ENCODE measurements at regions of chr15 and their contacts with region 1.

Region 1: DNA sequence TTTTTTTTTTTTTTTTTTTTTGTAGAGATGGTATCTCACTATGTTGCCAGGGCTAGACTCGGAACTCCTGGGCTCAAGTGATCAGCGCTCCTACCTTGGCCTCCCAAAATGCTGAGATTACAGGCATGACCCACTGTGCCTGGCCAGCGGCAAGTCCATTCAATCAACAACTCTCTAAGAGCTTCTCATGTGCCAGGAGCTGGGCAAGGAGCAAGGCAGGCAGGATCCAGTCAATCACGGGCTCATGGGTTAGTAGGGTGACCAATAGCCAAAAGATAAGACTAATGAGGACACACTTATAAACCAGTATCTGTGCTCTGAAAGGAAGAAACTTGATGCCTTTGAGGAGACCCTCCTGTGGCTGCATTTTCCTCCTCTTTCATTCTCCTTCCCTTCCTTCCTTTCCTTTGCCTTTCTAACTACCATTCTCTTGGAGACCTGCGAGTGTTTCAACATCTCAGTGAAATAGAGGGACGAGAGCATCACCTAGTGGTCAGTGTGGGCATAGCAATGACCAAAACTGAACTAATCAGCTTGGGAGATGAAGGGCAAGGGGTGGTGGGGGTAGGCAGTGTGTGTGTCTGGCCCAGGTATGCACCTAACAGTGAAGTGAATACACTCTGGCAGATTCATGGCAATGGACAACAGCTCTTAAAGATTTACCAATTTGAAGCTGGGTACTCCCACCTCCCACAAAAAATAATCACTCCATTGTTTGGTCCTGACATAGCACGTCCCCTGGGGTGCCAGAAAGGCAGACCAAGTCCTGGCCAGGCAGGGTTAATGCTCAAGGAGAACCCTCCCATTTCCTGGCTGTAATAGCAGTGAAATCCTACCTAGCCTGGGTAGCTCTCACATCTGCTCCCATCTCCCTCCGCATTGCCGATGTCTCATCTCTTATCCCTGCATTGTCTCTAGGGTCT is 6.2 kb downstream of the RPP25 start:
- DNase-seq: peak; percentile 54 to 82 (median 75)
- ATAC-seq: peak; percentile 97
- H3K4me3 ChIP-seq: no peak overlapping the region
- H3K4me3 Mint-ChIP-seq: no peak overlapping the region
- H3K27ac ChIP-seq: no peak overlapping the region
- H3K27ac Mint-ChIP-seq: peak overlapping the region in 2 of 9 donors; percentile 28 to 54
- H3K4me1 ChIP-seq: no peaks in the 10 kb centered on the region
- H3K4me1 Mint-ChIP-seq: peaks cover 4 to 17% (median 10%) of the 10 kb centered on the region in 7 donors
- H3K27me3 ChIP-seq: no peaks in the 10 kb centered on the region
- H3K27me3 Mint-ChIP-seq: peaks cover 0 to 3% (median 0%) of the 10 kb centered on the region in 5 donors

Region 2: GRCh38 chr15:74799856-74800547 is 150.3 kb before region 1 on chr15:
- CTCF ChIA-PET with region 1: interaction called, 6 read pairs
- POLR2A ChIA-PET with region 1: interaction called, 3 read pairs
- intact Hi-C with region 1: loop called in 1 of 2 experiments (anchors 1 kb)
- DNase-seq: peak; percentile 76 to 92 (median 85)
- ATAC-seq: peak; percentile 98
- H3K4me3 ChIP-seq: no peak overlapping the region
- H3K4me3 Mint-ChIP-seq: peak overlapping the region in 6 of 10 donors; percentile 13 to 61 (median 41)
- H3K27ac ChIP-seq: peak overlapping the region; percentile 92
- H3K27ac Mint-ChIP-seq: peak overlapping the region; percentile 66 to 93 (median 84)
- H3K4me1 ChIP-seq: peaks cover 51 to 54% of the 10 kb centered on the region in 2 donors
- H3K4me1 Mint-ChIP-seq: peaks cover 31 to 60% (median 48%) of the 10 kb centered on the region in 7 donors
- H3K27me3 ChIP-seq: no peaks in the 10 kb centered on the region
- H3K27me3 Mint-ChIP-seq: no peaks in the 10 kb centered on the region